ENCODE measurements at regions of chr11 and their contacts with region 1.

Region 1: GRCh38 chr11:113404859-113405430 is 17.4 kb downstream of the ANKK1 start:
- DNase-seq: no peak
- H3K4me3 ChIP-seq: no peak overlapping the region
- H3K27ac ChIP-seq: no peak overlapping the region
- H3K4me1 ChIP-seq: no peaks in the 10 kb centered on the region
- H3K27me3 ChIP-seq: no peaks in the 10 kb centered on the region
- CTCF ChIP-seq: no peak
- EP300 ChIP-seq: no peak
- POLR2A ChIP-seq: no peak

Region 2: DNA sequence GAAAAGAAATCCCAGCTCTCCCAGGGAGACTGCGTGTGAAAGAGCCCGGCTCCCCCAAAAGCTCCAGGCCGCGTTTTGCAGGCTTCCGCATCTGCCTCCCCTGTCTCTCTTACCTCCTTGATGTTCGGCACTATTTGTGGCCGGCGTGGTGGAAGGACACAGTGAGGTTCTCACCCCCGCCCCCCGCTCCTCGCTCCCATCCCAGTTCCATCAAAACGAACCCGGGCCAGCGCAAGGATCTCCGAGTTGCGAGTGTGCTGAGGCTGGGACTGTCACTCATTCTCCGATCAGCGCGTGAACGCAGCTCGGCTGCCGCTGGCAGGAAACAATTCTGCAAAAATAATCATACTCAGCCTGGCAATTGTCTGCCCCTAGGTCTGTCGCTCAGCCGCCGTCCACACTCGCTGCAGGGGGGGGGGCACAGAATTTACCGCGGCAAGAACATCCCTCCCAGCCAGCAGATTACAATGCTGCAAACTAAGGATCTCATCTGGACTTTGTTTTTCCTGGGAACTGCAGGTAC is 443.7 kb before region 1 on chr11 and contains the start of gene NCAM1:
- intact Hi-C with region 1: no loop called
- DNase-seq: peak; percentile 81 to 93 (median 88)
- H3K4me3 ChIP-seq: peak within 1 kb of the TSS; percentile 62
- H3K27ac ChIP-seq: peak within 1 kb of the TSS in 1 of 2 donors; percentile 27
- H3K4me1 ChIP-seq: no peaks in the 10 kb centered on the region
- H3K27me3 ChIP-seq: no peaks in the 10 kb centered on the region
- CTCF ChIP-seq: no peak
- EP300 ChIP-seq: no peak
- POLR2A ChIP-seq: no peak
- total RNA-seq, gene NCAM1: 57.7 to 194 (median 114) TPM

Region 3: DNA sequence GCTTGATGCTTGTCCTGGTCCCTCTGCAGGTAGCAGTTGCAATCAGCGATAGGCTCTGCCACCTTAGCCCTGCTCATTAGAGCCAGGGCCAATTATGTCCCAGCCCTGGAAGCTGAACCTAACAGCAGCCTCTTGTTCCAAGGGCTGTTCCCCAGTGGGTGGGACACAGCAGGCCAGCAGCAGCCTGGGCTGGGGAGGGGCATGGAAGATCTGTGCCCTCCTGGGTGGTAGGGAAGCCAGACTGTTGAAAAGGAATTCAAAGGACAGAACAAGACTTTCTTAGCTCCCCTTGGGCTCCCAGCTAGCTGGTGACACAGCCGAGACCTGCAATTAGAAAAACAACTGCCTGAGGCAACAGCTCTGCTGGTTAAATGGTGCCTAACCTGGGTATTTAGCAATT is 52.8 kb after region 1 on chr11:
- intact Hi-C with region 1: loop called in 1 of 4 experiments (anchors 5 kb)
- DNase-seq: no peak
- H3K4me3 ChIP-seq: no peak overlapping the region
- H3K27ac ChIP-seq: no peak overlapping the region
- H3K4me1 ChIP-seq: no peaks in the 10 kb centered on the region
- H3K27me3 ChIP-seq: no peaks in the 10 kb centered on the region
- CTCF ChIP-seq: no peak
- EP300 ChIP-seq: no peak
- POLR2A ChIP-seq: no peak

Measured in ovary (tissue), 10 donors.